PC-9 (cell line): ENCODE measurements at regions of chr3 and their contacts with region 1.

Region 1: DNA sequence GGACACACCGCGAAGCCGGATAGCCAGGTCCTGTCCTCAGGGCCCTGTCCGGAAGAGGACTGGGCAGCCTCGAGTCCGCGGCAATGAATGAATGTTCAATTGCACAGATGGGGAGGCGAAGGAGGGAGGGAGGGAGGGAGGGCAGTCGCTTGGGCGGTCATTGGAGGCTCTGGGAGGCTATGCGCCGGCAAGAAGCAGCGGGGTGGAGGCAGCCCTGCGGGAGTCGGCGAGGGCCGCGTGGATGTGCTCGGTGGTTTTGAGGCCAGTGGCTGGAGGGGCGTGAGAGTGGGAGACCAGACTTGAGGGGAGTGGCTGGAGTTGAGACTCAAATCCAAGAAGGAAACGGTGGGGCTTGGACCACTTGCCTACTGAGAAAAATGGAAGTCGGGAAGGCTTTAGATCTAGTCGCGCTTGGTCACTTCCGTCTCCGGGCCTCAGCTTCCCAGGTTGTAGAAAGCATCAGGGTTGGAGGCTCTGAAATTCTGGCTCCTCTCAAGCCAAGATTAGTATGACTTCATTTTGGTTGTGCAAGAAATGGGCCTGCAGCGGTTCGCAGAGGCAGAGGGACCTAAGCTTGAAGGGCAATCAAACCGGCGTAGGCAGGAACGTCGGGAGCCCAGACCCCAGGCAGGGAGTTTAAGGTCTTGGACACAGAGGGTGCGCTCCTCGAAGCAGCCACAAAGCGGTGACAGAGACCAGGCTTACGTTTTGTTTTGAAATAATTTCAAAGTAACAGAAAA is 21.1 kb upstream of the PLXND1 start:
- DNase-seq: peak; percentile 81 to 85
- H3K4me3 ChIP-seq: peak overlapping the region; percentile 99
- H3K27ac ChIP-seq: peak overlapping the region; percentile 96
- H3K4me1 ChIP-seq: peaks cover 27% of the 10 kb centered on the region
- H3K27me3 ChIP-seq: no peaks in the 10 kb centered on the region
- CTCF ChIP-seq: peak; percentile 92

Region 2: DNA sequence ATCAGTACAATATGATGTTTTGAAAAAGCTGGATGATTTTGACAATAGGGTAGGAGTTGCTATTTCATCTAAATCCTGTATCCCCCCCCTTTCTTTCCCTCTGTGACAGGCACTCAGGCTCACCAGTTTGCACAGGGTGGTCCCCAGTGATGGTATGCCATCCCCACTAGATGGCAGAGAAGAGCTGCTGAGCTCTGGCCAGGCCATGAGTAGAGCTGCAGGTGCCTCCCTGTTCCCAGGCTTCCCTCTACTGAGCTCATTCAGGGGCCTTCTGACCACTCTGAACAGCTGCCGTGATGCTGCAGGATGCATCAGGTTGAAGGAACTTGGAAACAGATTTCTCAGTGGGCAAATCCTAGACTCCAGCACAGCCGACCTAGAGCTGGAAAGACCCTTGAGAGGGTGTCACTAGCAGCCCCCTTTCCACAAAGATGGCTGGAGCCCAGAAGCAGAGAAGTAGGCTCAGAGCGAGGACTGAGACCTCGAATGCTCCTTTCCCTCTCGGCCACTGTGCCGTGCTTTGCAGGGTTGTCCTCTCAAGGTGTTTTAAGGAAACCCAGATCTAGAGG is 244.2 kb before region 1 on chr3:
- CTCF ChIA-PET with region 1: no interaction called
- POLR2A ChIA-PET with region 1: no interaction called
- intact Hi-C with region 1: loop called (anchors 1 kb)
- DNase-seq: peak; percentile 49 to 66
- H3K4me3 ChIP-seq: no peak overlapping the region
- H3K27ac ChIP-seq: no peak overlapping the region
- H3K4me1 ChIP-seq: peaks cover 6% of the 10 kb centered on the region
- H3K27me3 ChIP-seq: no peaks in the 10 kb centered on the region
- CTCF ChIP-seq: peak; percentile 85

Region 3: GRCh38 chr3:129461022-129461421 is 166.6 kb before region 1 on chr3:
- CTCF ChIA-PET with region 1: interaction called, 14 read pairs
- POLR2A ChIA-PET with region 1: no interaction called
- intact Hi-C with region 1: no loop called
- DNase-seq: peak in 1 of 2 experiments; percentile 80
- H3K4me3 ChIP-seq: no peak overlapping the region
- H3K27ac ChIP-seq: peak overlapping the region; percentile 83
- H3K4me1 ChIP-seq: peaks cover 33% of the 10 kb centered on the region
- H3K27me3 ChIP-seq: no peaks in the 10 kb centered on the region
- CTCF ChIP-seq: no peak

Region 4: GRCh38 chr3:129663026-129663446 is 35.4 kb after region 1 on chr3:
- CTCF ChIA-PET with region 1: interaction called, 5 read pairs
- POLR2A ChIA-PET with region 1: interaction called, 9 read pairs
- intact Hi-C with region 1: loop called (anchors 1 kb)
- DNase-seq: peak; percentile 91 to 100
- H3K4me3 ChIP-seq: no peak overlapping the region
- H3K27ac ChIP-seq: peak overlapping the region; percentile 98
- H3K4me1 ChIP-seq: peaks cover 93% of the 10 kb centered on the region
- H3K27me3 ChIP-seq: no peaks in the 10 kb centered on the region
- CTCF ChIP-seq: no peak

Region 5: GRCh38 chr3:129824926-129825541 is 197.4 kb after region 1 on chr3:
- CTCF ChIA-PET with region 1: interaction called, 5 read pairs
- POLR2A ChIA-PET with region 1: interaction called, 3 read pairs
- intact Hi-C with region 1: loop called (anchors 1 kb)
- DNase-seq: peak; percentile 39 to 52
- H3K4me3 ChIP-seq: no peak overlapping the region
- H3K27ac ChIP-seq: no peak overlapping the region
- H3K4me1 ChIP-seq: peaks cover 32% of the 10 kb centered on the region
- H3K27me3 ChIP-seq: no peaks in the 10 kb centered on the region
- CTCF ChIP-seq: peak; percentile 87

Region 6: GRCh38 chr3:129994883-129995559 is 367.4 kb after region 1 on chr3:
- CTCF ChIA-PET with region 1: no interaction called
- POLR2A ChIA-PET with region 1: no interaction called
- intact Hi-C with region 1: loop called (anchors 5 kb)
- DNase-seq: no peak
- H3K4me3 ChIP-seq: no peak overlapping the region
- H3K27ac ChIP-seq: no peak overlapping the region
- H3K4me1 ChIP-seq: no peaks in the 10 kb centered on the region
- H3K27me3 ChIP-seq: no peaks in the 10 kb centered on the region
- CTCF ChIP-seq: no peak